ENCODE measurements at regions of chr11 and their contacts with region 1.

Region 1: DNA sequence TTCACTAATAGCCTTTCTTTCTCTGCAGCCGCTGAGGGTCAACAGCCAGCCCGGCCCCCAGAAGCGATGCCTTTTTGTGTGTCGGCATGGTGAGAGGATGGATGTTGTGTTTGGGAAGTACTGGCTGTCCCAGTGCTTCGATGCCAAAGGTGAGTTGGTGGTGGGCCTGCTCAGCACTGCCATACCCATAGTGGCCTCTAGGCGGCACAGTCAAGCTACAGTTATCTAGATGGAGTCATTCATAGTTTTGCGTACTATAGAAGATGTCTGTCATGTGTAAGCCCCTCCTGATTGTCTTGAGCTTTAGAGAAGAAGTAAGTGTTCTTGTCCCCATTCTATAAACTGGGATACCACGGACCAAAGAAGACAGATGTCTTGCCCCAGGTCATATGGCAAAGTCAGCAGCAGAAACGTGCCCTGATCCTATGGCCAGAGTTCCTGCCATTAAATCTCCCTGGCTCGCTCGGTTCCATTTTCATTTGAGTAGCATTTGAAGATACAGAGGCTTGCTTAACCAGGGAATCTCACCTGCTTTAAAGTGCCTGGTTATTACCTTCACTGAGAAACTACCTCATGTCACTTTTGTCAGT is 42.1 kb upstream of the CRTAM start:
- DNase-seq: peak in 5 of 6 donors; percentile 8 to 78 (median 50)
- ATAC-seq: peak in 3 of 4 donors; percentile 75 to 77 (median 77)
- H3K4me3 ChIP-seq: no peak overlapping the region
- H3K27ac ChIP-seq: no peak overlapping the region
- H3K4me1 ChIP-seq: no peaks in the 10 kb centered on the region
- H3K27me3 ChIP-seq: no peaks in the 10 kb centered on the region
- CTCF ChIP-seq: peak; percentile 68 to 80 (median 73)

Region 2: GRCh38 chr11:122843281-122844141 is 47.3 kb after region 1 on chr11:
- intact Hi-C with region 1: loop called in 1 of 3 experiments (anchors 10 kb)
- DNase-seq: no peak
- ATAC-seq: peak in 1 of 4 donors; percentile 32
- H3K4me3 ChIP-seq: no peak overlapping the region
- H3K27ac ChIP-seq: no peak overlapping the region
- H3K4me1 ChIP-seq: no peaks in the 10 kb centered on the region
- H3K27me3 ChIP-seq: peaks cover 0 to 2% (median 0%) of the 10 kb centered on the region in 4 donors
- CTCF ChIP-seq: no peak

Region 3: DNA sequence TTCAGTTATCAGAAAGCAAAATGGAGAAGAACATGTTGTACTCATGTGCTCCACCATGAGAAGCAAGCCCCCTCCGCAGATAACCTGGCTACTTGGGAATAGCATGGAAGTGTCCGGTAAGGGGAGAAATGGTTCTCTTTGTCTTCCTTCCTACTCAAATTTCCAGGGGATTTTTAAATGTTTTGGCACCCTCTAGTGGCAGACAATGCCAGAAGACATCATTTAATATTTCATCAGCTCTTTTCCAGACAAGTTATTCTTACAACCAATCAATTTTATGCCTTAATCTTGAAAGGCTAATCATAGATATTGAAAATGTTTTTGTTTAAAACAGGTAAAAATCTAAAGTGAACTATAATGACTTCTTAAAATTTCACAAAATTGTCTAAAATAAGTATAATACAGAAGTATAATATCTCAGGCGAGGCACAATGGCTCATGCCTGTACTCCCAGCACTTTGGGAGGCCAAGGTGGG is 57.8 kb after region 1 on chr11:
- intact Hi-C with region 1: loop called in 2 of 3 experiments (anchors 10 kb)
- DNase-seq: peak in 3 of 6 donors; percentile 13 to 55 (median 22)
- ATAC-seq: peak; percentile 40 to 88 (median 82)
- H3K4me3 ChIP-seq: no peak overlapping the region
- H3K27ac ChIP-seq: no peak overlapping the region
- H3K4me1 ChIP-seq: no peaks in the 10 kb centered on the region
- H3K27me3 ChIP-seq: peaks cover 0 to 9% (median 0%) of the 10 kb centered on the region in 4 donors
- CTCF ChIP-seq: peak; percentile 36 to 71 (median 61)